Naive thymus-derived CD4-positive, alpha-beta T cell (primary cell): ENCODE measurements at regions of chr5 and their contacts with region 1.

Region 1: GRCh38 chr5:180090098-180090768 is 18.7 kb upstream of the RNF130 start:
- DNase-seq: peak; percentile 71 to 90 (median 85)
- ATAC-seq: peak; percentile 90
- H3K4me3 ChIP-seq: peak overlapping the region; percentile 81
- H3K4me3 Mint-ChIP-seq: peak overlapping the region; percentile 82 to 92 (median 88)
- H3K27ac ChIP-seq: peak overlapping the region; percentile 63
- H3K27ac Mint-ChIP-seq: peak overlapping the region in 8 of 9 donors; percentile 48 to 95 (median 84)
- H3K4me1 ChIP-seq: peaks cover 6% of the 10 kb centered on the region in 2 donors
- H3K4me1 Mint-ChIP-seq: peaks cover 6 to 34% (median 27%) of the 10 kb centered on the region in 7 donors
- H3K27me3 ChIP-seq: no peaks in the 10 kb centered on the region
- H3K27me3 Mint-ChIP-seq: peaks cover 0 to 10% (median 0%) of the 10 kb centered on the region in 5 donors

Region 2: DNA sequence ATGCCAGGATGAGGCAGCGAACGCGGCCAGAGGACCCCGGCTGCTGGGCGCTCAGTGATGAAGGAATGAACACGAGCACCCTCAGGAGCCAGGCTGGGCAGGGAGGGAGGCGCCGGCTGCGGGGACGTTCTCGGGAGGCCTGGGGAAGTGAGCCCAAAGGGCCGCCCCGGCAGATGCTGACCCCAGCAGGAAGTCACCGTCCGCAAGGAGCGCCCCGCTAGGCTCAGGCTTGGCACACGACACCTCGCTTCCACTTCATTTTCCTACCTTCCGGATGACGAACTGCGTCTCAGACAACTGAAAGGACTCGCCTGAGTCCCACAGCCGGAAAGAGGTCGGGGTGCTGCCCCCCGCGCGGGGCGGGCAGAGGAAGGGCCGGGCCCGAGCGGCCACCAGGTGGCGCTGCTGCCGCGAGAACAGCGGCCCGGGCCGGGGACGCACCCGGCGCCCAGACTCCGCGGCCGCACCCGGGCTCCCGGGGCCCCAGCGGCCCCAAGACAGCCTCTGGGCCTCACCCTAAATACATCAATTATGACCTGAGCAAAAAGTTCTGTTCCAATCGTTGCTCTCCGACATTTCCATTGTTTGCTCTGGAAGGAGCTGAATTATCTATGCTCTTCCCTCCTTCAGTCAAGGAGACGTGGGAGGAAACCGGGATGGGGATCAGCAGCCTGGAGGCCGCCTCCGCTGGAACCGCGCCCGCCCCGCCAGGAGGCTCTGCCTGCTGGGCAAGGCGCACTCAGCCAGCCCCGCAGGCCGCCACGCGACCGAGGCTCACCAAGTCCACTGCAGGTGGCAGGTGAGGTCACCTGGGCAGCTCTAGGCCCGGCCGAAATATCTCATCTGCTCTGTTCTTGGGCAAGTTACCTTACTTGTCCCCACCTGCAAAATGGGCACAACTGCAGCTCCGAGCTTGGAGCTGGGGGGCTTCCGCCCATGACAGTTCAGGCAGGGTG is 923.1 kb before region 1 on chr5:
- CTCF ChIA-PET with region 1: no interaction called
- POLR2A ChIA-PET with region 1: no interaction called
- intact Hi-C with region 1: loop called in 1 of 2 experiments (anchors 5 kb)
- DNase-seq: peak; percentile 39 to 79 (median 64)
- ATAC-seq: peak; percentile 80
- H3K4me3 ChIP-seq: peak overlapping the region; percentile 4
- H3K4me3 Mint-ChIP-seq: peak overlapping the region in 9 of 10 donors; percentile 20 to 73 (median 56)
- H3K27ac ChIP-seq: no peak overlapping the region
- H3K27ac Mint-ChIP-seq: no peak overlapping the region
- H3K4me1 ChIP-seq: no peaks in the 10 kb centered on the region
- H3K4me1 Mint-ChIP-seq: peaks cover 0 to 7% (median 4%) of the 10 kb centered on the region in 7 donors
- H3K27me3 ChIP-seq: no peaks in the 10 kb centered on the region
- H3K27me3 Mint-ChIP-seq: peaks cover 0 to 5% (median 4%) of the 10 kb centered on the region in 5 donors

Region 3: GRCh38 chr5:179678223-179679013 is 411.8 kb before region 1 on chr5:
- CTCF ChIA-PET with region 1: no interaction called
- POLR2A ChIA-PET with region 1: interaction called, 6 read pairs
- intact Hi-C with region 1: loop called in 1 of 2 experiments (anchors 5 kb)
- DNase-seq: peak; percentile 88 to 95 (median 92)
- ATAC-seq: peak; percentile 91
- H3K4me3 ChIP-seq: peak overlapping the region; percentile 99
- H3K4me3 Mint-ChIP-seq: peak overlapping the region; percentile 95 to 99 (median 98)
- H3K27ac ChIP-seq: peak overlapping the region; percentile 87
- H3K27ac Mint-ChIP-seq: peak overlapping the region; percentile 89 to 99 (median 97)
- H3K4me1 ChIP-seq: peaks cover 4 to 5% of the 10 kb centered on the region in 2 donors
- H3K4me1 Mint-ChIP-seq: peaks cover 15 to 39% (median 30%) of the 10 kb centered on the region in 7 donors
- H3K27me3 ChIP-seq: no peaks in the 10 kb centered on the region
- H3K27me3 Mint-ChIP-seq: peaks cover 0 to 5% (median 0%) of the 10 kb centered on the region in 5 donors

Region 4: DNA sequence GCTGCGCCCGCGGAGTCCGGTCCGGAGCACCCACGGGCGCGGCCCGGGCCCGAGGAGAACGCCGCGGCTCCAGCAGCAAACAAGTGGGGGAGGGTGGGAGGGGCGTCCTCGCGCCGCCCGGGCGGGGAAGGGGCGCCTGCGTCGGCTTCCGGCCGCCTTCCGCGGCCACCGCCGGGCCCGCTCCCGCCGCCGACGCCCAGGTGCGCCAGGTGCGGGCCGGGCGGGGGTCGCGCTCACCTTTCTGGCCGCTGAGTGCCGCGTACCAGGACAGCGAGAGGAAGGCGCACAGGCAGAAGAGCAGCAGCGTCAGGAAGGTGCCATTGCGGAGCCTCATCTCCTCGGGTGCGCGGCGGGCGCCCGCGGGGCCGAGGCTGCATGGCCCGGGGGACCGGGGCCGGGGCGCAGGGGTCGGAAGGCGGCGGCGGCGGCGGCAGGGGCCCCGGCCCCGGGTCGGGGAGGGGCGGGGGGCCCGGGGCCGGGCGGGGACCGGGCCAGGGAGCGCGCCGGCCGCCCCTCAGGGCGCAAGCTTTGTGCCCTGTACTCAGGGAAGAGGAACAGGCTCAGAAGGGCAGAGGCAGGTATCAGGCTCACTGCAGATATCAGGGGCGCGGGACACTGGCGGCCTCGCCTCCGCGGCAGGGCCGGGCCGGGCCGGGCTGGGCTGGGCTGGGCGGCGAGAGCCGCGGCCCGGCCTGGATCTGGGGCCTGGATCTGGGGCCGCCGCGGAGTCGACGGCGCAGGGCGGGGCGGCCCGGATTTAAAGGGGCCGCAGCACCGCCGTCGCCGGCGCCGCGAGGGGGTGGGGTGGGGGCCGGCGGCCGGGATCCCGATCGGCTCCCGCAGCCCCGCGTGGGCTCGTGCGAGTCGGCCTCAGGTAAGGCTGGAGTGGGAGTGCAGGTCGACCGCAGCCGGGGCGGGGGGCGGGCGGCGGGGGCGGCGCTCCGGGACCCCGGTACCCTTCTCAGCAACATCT is 283.7 kb before region 1 on chr5 and contains the start of gene MGAT4B:
- CTCF ChIA-PET with region 1: interaction called, 7 read pairs
- POLR2A ChIA-PET with region 1: no interaction called
- intact Hi-C with region 1: loop called (anchors 1 kb)
- DNase-seq: peak in 8 of 9 donors; percentile 28 to 81 (median 57)
- ATAC-seq: peak; percentile 84
- H3K4me3 ChIP-seq: peak within 1 kb of the TSS; percentile 41
- H3K4me3 Mint-ChIP-seq: peak within 1 kb of the TSS; percentile 46 to 87 (median 80)
- H3K27ac ChIP-seq: peak within 1 kb of the TSS; percentile 73
- H3K27ac Mint-ChIP-seq: peak within 1 kb of the TSS in 5 of 9 donors; percentile 22 to 85 (median 70)
- H3K4me1 ChIP-seq: peaks cover 19 to 26% of the 10 kb centered on the region in 2 donors
- H3K4me1 Mint-ChIP-seq: peaks cover 24 to 41% (median 33%) of the 10 kb centered on the region in 7 donors
- H3K27me3 ChIP-seq: no peaks in the 10 kb centered on the region
- H3K27me3 Mint-ChIP-seq: no peaks in the 10 kb centered on the region
- total RNA-seq, gene MGAT4B: 98.3 to 143 (median 118) TPM

Region 5: GRCh38 chr5:179923436-179923835 is 166.8 kb before region 1 on chr5:
- CTCF ChIA-PET with region 1: no interaction called
- POLR2A ChIA-PET with region 1: no interaction called
- intact Hi-C with region 1: loop called in 1 of 2 experiments (anchors 5 kb)
- DNase-seq: no peak
- ATAC-seq: peak; percentile 58
- H3K4me3 ChIP-seq: no peak overlapping the region
- H3K4me3 Mint-ChIP-seq: no peak overlapping the region
- H3K27ac ChIP-seq: no peak overlapping the region
- H3K27ac Mint-ChIP-seq: no peak overlapping the region
- H3K4me1 ChIP-seq: no peaks in the 10 kb centered on the region
- H3K4me1 Mint-ChIP-seq: no peaks in the 10 kb centered on the region
- H3K27me3 ChIP-seq: no peaks in the 10 kb centered on the region
- H3K27me3 Mint-ChIP-seq: peaks cover 0 to 3% (median 0%) of the 10 kb centered on the region in 5 donors

Region 6: DNA sequence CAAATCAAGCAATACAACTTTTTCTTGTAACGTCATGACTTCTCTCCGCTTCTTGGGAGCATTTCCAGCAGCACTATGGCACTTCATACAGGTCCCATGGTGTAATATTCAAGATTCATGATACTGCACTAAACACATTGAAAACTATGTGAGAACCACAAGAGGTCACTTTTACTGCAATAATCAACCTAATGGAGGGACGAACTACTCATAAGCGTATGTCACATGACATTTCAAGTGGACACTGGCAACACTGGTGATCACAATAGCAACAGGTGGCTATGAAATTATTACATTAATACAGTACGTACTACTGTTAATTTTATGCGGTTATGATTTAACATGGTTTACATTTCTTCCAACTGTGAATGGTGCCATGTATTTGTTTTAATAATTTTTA is 103.9 kb before region 1 on chr5:
- CTCF ChIA-PET with region 1: no interaction called
- POLR2A ChIA-PET with region 1: no interaction called
- intact Hi-C with region 1: loop called in 1 of 2 experiments (anchors 2 kb)
- DNase-seq: no peak
- ATAC-seq: no peak
- H3K4me3 ChIP-seq: no peak overlapping the region
- H3K4me3 Mint-ChIP-seq: no peak overlapping the region
- H3K27ac ChIP-seq: no peak overlapping the region
- H3K27ac Mint-ChIP-seq: no peak overlapping the region
- H3K4me1 ChIP-seq: no peaks in the 10 kb centered on the region
- H3K4me1 Mint-ChIP-seq: no peaks in the 10 kb centered on the region
- H3K27me3 ChIP-seq: no peaks in the 10 kb centered on the region
- H3K27me3 Mint-ChIP-seq: peaks cover 0 to 4% (median 0%) of the 10 kb centered on the region in 5 donors

Region 7: GRCh38 chr5:180047667-180048066 is 42.6 kb before region 1 on chr5:
- CTCF ChIA-PET with region 1: no interaction called
- POLR2A ChIA-PET with region 1: no interaction called
- intact Hi-C with region 1: no loop called
- DNase-seq: no peak
- ATAC-seq: no peak
- H3K4me3 ChIP-seq: no peak overlapping the region
- H3K4me3 Mint-ChIP-seq: no peak overlapping the region
- H3K27ac ChIP-seq: no peak overlapping the region
- H3K27ac Mint-ChIP-seq: peak overlapping the region in 1 of 9 donors; percentile 72
- H3K4me1 ChIP-seq: no peaks in the 10 kb centered on the region
- H3K4me1 Mint-ChIP-seq: peaks cover 0 to 26% (median 13%) of the 10 kb centered on the region in 7 donors
- H3K27me3 ChIP-seq: no peaks in the 10 kb centered on the region
- H3K27me3 Mint-ChIP-seq: no peaks in the 10 kb centered on the region

Region 8: GRCh38 chr5:180071531-180072255 is 18.5 kb before region 1 on chr5 and contains the start of gene RNF130:
- CTCF ChIA-PET with region 1: interaction called, 3 read pairs
- POLR2A ChIA-PET with region 1: interaction called, 4 read pairs
- intact Hi-C with region 1: loop called in 1 of 2 experiments (anchors 1 kb)
- DNase-seq: peak; percentile 64 to 91 (median 77)
- ATAC-seq: peak; percentile 88
- H3K4me3 ChIP-seq: peak within 1 kb of the TSS; percentile 62
- H3K4me3 Mint-ChIP-seq: peak within 1 kb of the TSS; percentile 80 to 93 (median 91)
- H3K27ac ChIP-seq: peak within 1 kb of the TSS; percentile 76
- H3K27ac Mint-ChIP-seq: peak within 1 kb of the TSS in 8 of 9 donors; percentile 78 to 95 (median 90)
- H3K4me1 ChIP-seq: peaks cover 6 to 21% of the 10 kb centered on the region in 2 donors
- H3K4me1 Mint-ChIP-seq: peaks cover 10 to 47% (median 38%) of the 10 kb centered on the region in 7 donors
- H3K27me3 ChIP-seq: no peaks in the 10 kb centered on the region
- H3K27me3 Mint-ChIP-seq: peaks cover 0 to 50% (median 0%) of the 10 kb centered on the region in 5 donors
- total RNA-seq, gene RNF130: 3.6 to 76.3 (median 23.3) TPM

Region 9: GRCh38 chr5:180126726-180127681 is 36.8 kb after region 1 on chr5:
- CTCF ChIA-PET with region 1: no interaction called
- POLR2A ChIA-PET with region 1: no interaction called
- intact Hi-C with region 1: no loop called
- DNase-seq: peak in 5 of 9 donors; percentile 17 to 60 (median 19)
- ATAC-seq: peak; percentile 69
- H3K4me3 ChIP-seq: no peak overlapping the region
- H3K4me3 Mint-ChIP-seq: no peak overlapping the region
- H3K27ac ChIP-seq: no peak overlapping the region
- H3K27ac Mint-ChIP-seq: no peak overlapping the region
- H3K4me1 ChIP-seq: no peaks in the 10 kb centered on the region
- H3K4me1 Mint-ChIP-seq: peaks cover 0 to 3% (median 0%) of the 10 kb centered on the region in 7 donors
- H3K27me3 ChIP-seq: no peaks in the 10 kb centered on the region
- H3K27me3 Mint-ChIP-seq: peaks cover 6 to 25% (median 24%) of the 10 kb centered on the region in 5 donors